ENCODE measurements at regions of chr18 and their contacts with region 1.

Region 1: DNA sequence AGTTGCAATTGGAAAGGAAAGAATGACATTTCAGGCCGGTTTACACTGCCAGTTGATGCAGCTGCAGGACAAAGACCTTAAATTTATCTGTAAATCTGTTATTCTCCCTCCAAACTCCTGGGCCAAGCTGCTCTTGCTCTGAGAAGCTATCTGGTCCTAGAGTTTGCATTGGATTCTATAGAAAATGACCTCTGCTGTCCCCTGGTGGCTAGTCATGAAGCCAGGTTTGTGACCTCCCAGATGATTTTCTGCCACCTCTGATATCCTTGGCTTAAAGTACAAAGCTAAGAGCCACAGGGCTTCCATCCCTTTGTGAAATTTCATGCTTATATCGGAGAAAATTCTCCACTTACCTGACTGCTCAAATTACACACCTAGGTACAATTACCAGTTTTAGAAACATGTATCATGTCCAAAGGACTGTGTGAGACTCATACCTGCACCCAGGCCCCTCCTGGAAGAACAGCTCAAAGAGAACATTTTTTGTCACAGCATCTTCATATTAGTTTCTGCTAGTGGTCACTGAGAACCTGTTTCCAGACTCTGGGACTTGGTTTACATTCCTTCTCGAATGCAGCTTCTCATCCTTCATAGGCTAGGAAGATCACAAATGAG is 28.9 kb upstream of the IER3IP1 start:
- DNase-seq: peak in 3 of 5 donors; percentile 37 to 67 (median 49)
- H3K4me3 ChIP-seq: no peak overlapping the region
- H3K27ac ChIP-seq: no peak overlapping the region
- H3K4me1 ChIP-seq: no peaks in the 10 kb centered on the region
- H3K27me3 ChIP-seq: no peaks in the 10 kb centered on the region
- CTCF ChIP-seq: peak; percentile 75

Region 2: GRCh38 chr18:46877329-46877987 is 327.6 kb before region 1 on chr18:
- intact Hi-C with region 1: no loop called
- DNase-seq: no peak
- H3K4me3 ChIP-seq: no peak overlapping the region
- H3K27ac ChIP-seq: no peak overlapping the region
- H3K4me1 ChIP-seq: no peaks in the 10 kb centered on the region
- H3K27me3 ChIP-seq: no peaks in the 10 kb centered on the region
- CTCF ChIP-seq: no peak

Region 3: DNA sequence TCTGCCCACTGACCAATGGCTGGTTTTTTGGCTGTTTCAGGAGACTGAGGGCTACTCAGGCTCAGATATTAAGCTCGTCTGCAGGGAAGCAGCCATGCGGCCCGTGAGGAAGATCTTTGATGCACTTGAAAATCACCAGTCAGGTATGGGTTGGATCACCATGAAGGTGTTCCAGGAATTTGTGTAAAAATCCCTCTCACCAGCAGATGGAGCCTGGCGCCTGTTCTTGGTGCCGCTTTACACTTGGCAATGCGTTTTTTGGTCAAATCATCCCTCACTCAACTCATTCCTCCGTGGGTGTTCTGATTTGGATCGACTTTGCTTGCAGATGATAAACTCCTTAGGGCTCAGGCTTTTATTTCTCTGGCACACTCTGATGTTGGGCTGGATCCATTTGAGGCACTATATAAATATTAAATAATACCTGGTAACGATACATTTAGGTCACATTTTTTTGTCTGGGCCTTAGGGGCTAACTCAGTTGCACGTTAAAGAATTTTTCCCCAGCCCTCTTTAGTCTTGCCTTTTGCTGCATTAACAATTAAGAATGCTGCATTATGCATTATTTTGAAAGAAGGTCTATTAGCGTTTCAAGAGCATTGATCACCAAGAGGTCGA is 104.7 kb before region 1 on chr18:
- intact Hi-C with region 1: loop called (anchors 10 kb)
- DNase-seq: peak in 4 of 5 donors; percentile 49 to 70 (median 60)
- H3K4me3 ChIP-seq: no peak overlapping the region
- H3K27ac ChIP-seq: no peak overlapping the region
- H3K4me1 ChIP-seq: no peaks in the 10 kb centered on the region
- H3K27me3 ChIP-seq: no peaks in the 10 kb centered on the region
- CTCF ChIP-seq: peak; percentile 73